ENCODE measurements at regions of chr2 and their contacts with region 1.

Region 1: DNA sequence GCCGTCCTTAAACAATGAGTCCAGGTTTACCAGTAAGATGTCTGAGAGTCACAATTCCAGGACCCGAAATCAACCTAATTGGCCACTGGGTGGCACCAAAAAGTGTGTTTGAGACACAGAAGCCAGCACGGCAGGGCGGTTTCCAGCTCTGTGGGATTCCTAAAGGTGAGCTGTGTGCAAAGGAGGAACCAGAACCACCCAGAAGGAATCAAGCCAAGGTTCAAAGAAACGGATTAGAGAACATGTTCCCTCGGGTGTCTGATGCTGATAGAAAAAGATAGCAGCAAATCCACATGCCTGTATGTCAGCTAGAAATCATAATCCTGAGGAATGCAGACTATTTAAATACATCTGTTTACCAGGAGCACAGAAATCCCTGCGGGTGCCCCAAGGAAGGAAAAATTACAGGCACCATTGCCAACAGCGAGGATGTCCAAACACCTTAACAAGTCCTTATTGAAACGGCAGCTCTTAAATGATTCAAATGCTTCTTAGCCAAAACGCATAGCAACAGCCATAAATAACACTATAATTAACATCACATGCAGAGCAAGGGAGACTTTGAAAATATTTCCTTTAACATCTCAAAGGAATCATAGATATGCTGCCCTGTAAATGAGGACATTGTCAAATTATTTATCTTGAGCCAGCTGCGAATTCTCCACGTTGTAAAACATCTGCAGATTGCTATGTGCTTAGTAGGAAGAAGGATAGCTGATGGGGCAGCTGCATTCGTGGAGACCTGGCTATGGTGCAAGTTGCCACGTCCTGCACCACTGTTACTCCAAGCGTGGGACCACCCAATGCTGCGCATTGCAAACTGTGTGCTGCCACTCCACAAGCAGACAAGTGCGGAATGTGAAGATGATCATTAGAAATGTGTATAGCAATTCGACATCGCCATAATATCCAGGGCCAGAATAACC is 318.7 kb upstream of the NCKAP5 start:
- DNase-seq: peak; percentile 54 to 79
- H3K4me3 ChIP-seq: no peak overlapping the region
- H3K27ac ChIP-seq: no peak overlapping the region
- H3K4me1 ChIP-seq: peaks cover 0 to 3% (median 2%) of the 10 kb centered on the region in 4 experiments; a peak in 3 of 7 replicates
- H3K27me3 ChIP-seq: no peaks in the 10 kb centered on the region
- CTCF ChIP-seq: peak; percentile 53 to 80 (median 74)
- EP300 ChIP-seq: no peak
- POLR2A ChIP-seq: no peak
- RAD21 ChIP-seq: peak; percentile 87 to 94

Region 2: DNA sequence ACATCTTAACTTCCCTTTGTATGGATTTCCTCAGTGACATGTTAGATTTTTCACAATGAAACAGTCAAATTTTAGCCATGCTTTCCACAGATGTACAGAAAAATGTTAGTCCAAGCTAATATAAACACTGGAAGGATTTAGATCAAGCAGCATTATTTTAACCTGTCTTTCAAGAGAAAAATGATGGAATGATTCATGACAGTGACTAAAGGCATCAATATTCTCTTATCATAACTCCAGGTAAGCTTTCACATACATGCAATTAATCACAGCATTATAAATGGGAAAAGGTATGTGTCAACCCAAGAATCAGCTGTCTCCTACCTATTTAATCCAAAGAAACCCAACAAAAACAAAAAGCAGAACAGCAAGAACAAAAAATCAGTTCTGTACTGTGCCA is 411.4 kb before region 1 on chr2:
- CTCF ChIA-PET with region 1: no interaction called
- POLR2A ChIA-PET with region 1: no interaction called
- DNase-seq: no peak
- H3K4me3 ChIP-seq: no peak overlapping the region
- H3K27ac ChIP-seq: no peak overlapping the region
- H3K4me1 ChIP-seq: no peaks in the 10 kb centered on the region
- H3K27me3 ChIP-seq: peaks cover 0 to 1% (median 0%) of the 10 kb centered on the region in 4 experiments; a peak in 1 of 7 replicates
- CTCF ChIP-seq: no peak
- EP300 ChIP-seq: no peak
- POLR2A ChIP-seq: no peak
- RAD21 ChIP-seq: no peak

Region 3: GRCh38 chr2:133705287-133705686 is 181.7 kb before region 1 on chr2:
- CTCF ChIA-PET with region 1: no interaction called
- POLR2A ChIA-PET with region 1: no interaction called
- DNase-seq: no peak
- H3K4me3 ChIP-seq: no peak overlapping the region
- H3K27ac ChIP-seq: no peak overlapping the region
- H3K4me1 ChIP-seq: no peaks in the 10 kb centered on the region
- H3K27me3 ChIP-seq: no peaks in the 10 kb centered on the region
- CTCF ChIP-seq: no peak
- EP300 ChIP-seq: no peak
- POLR2A ChIP-seq: no peak
- RAD21 ChIP-seq: no peak

Region 4: GRCh38 chr2:133755480-133756300 is 131.3 kb before region 1 on chr2:
- CTCF ChIA-PET with region 1: no interaction called
- POLR2A ChIA-PET with region 1: no interaction called
- DNase-seq: no peak
- H3K4me3 ChIP-seq: no peak overlapping the region
- H3K27ac ChIP-seq: no peak overlapping the region
- H3K4me1 ChIP-seq: no peaks in the 10 kb centered on the region; a peak in 2 of 7 replicates
- H3K27me3 ChIP-seq: no peaks in the 10 kb centered on the region
- CTCF ChIP-seq: no peak
- EP300 ChIP-seq: no peak
- POLR2A ChIP-seq: no peak
- RAD21 ChIP-seq: no peak

Region 5: DNA sequence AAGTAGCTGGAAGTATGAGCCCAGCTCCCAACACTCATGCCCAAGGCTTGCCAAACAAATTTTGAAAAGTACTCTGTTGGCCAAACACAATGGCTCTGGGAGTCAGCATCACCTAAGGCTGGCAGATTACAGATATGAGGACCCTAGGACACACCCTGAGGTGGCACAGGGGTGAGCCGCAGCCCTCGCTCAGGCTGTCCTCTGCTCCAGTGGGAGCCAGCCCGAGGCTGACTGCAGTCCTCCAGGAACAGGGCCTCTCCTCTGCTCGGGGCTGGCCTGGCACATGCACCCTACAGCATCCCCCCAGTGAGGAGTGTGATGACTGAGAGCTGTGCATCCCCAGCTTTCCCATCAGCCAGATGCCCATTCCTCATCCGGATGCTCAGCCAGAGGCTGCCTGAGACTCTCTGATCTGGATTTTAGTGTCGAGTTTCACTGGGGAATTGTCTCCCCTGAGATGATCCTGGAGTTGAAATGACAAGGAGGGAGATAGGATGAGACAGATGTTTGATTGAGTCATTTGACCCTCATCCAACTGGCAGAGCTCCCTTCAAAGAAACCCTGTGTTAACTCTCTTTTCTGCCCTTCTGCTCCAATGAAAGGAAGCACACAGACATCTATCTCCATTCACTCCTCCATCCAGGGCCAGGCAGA is 49.4 kb before region 1 on chr2:
- CTCF ChIA-PET with region 1: no interaction called
- POLR2A ChIA-PET with region 1: no interaction called
- DNase-seq: no peak
- H3K4me3 ChIP-seq: no peak overlapping the region
- H3K27ac ChIP-seq: no peak overlapping the region
- H3K4me1 ChIP-seq: no peaks in the 10 kb centered on the region
- H3K27me3 ChIP-seq: no peaks in the 10 kb centered on the region; a peak in 1 of 7 replicates
- CTCF ChIP-seq: no peak
- EP300 ChIP-seq: no peak
- POLR2A ChIP-seq: no peak
- RAD21 ChIP-seq: no peak

Region 6: GRCh38 chr2:133970641-133971040 is 83.6 kb after region 1 on chr2:
- CTCF ChIA-PET with region 1: interaction called, 10 read pairs
- POLR2A ChIA-PET with region 1: no interaction called
- DNase-seq: no peak
- H3K4me3 ChIP-seq: no peak overlapping the region
- H3K27ac ChIP-seq: no peak overlapping the region
- H3K4me1 ChIP-seq: peaks cover 0 to 7% (median 3%) of the 10 kb centered on the region in 4 experiments; a peak in 3 of 7 replicates
- H3K27me3 ChIP-seq: no peaks in the 10 kb centered on the region
- CTCF ChIP-seq: no peak
- EP300 ChIP-seq: no peak
- POLR2A ChIP-seq: no peak
- RAD21 ChIP-seq: no peak